ENCODE measurements at regions of chr12 and their contacts with region 1.

Region 1: DNA sequence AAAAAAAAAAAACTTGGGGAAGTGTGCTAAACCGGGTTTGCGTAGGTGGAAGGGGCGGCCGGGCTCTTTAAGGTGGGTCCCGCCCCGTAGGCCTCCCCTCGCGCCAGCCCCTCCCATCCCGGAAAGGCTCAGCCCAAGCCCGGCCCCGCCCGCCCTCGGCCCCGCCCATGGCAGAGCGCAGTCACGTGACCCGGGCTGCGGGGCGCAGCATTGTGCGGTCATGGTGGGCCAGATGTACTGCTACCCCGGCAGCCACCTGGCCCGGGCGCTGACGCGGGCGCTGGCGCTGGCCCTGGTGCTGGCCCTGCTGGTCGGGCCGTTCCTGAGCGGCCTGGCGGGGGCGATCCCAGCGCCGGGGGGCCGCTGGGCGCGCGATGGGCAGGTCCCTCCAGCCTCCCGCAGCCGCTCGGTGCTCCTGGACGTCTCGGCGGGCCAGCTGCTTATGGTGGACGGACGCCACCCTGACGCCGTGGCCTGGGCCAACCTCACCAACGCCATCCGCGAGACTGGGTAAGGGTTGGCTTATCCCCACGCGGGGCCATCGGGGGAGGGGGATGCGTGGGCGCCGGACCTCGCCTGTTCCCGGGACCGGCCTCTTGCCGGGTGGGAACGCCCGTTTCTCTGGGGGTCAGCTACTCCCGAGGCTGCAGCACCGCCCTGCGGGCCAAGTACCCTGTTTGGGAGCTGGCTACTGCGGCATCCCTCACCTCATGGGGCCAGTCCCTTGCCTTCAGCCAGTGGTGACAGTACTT is at the start of gene PLBD2:
- DNase-seq: peak; percentile 89 to 93 (median 90)
- H3K4me3 ChIP-seq: peak within 1 kb of the TSS; percentile 68 to 90 (median 86)
- H3K4me3 Mint-ChIP-seq: peak within 1 kb of the TSS; percentile 91 to 92
- H3K27ac ChIP-seq: peak within 1 kb of the TSS; percentile 69 to 82
- H3K27ac Mint-ChIP-seq: peak within 1 kb of the TSS; percentile 90 to 97 (median 94)
- H3K4me1 ChIP-seq: peaks cover 32 to 33% of the 10 kb centered on the region in 2 donors
- H3K4me1 Mint-ChIP-seq: peaks cover 34% of the 10 kb centered on the region
- H3K27me3 ChIP-seq: no peaks in the 10 kb centered on the region
- H3K27me3 Mint-ChIP-seq: peaks cover 0 to 5% (median 4%) of the 10 kb centered on the region in 3 donors
- CTCF ChIP-seq: no peak
- polyA plus RNA-seq, gene PLBD2: 8.5 to 12.4 (median 8.8) TPM

Region 2: GRCh38 chr12:113322343-113322742 is 36.2 kb before region 1 on chr12:
- intact Hi-C with region 1: loop called in 1 of 2 experiments (anchors 5 kb)
- DNase-seq: peak; percentile 75 to 85 (median 81)
- H3K4me3 ChIP-seq: no peak overlapping the region
- H3K4me3 Mint-ChIP-seq: no peak overlapping the region
- H3K27ac ChIP-seq: peak overlapping the region; percentile 48 to 51
- H3K27ac Mint-ChIP-seq: peak overlapping the region; percentile 84 to 93 (median 90)
- H3K4me1 ChIP-seq: no peaks in the 10 kb centered on the region
- H3K4me1 Mint-ChIP-seq: peaks cover 6% of the 10 kb centered on the region
- H3K27me3 ChIP-seq: no peaks in the 10 kb centered on the region
- H3K27me3 Mint-ChIP-seq: peaks cover 0 to 2% (median 2%) of the 10 kb centered on the region in 3 donors
- CTCF ChIP-seq: no peak

Region 3: DNA sequence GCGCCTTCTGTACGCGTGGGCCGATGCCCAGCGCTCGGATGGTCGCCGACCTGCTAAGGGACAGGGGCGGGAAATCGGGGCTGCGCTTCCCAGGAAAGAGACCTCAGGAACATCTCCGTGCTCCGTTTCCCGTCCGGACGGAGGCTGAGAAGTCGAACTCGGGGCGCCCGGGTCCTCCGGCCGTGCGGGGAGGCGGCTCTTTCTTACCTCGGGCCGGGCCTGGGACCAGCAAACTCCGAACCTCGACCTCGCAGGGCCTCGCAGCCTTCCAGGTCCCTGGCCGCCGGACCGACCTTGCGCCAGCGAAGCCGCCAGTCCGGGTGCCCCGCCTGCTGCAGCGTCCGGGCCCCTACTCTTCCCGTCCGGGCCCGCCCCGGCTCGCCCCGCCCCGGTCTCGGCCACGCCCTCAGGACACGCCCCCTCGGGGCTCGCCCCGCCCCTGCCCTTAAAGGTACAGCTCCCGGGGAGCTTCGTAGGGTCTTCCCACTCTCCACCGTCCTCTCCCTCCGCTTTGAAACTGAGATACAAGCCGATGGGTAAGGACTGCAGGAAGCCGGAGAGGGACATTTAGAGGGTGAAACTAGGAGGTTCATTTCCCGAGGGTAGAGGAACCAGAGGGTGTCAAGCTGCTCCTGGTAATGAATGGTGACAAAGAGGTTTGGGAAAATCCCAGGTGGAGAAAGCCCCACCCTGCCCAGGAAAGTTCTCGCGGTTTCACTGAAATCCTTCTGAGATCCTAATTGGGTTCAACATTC is 23.6 kb before region 1 on chr12 and contains the start of gene SLC8B1:
- intact Hi-C with region 1: loop called (anchors 1 to 2 kb)
- DNase-seq: peak; percentile 68 to 86 (median 79)
- H3K4me3 ChIP-seq: peak within 1 kb of the TSS; percentile 74 to 93 (median 75)
- H3K4me3 Mint-ChIP-seq: peak within 1 kb of the TSS; percentile 96 to 98
- H3K27ac ChIP-seq: peak within 1 kb of the TSS; percentile 72 to 88
- H3K27ac Mint-ChIP-seq: peak within 1 kb of the TSS; percentile 90 to 98 (median 93)
- H3K4me1 ChIP-seq: peaks cover 28 to 44% of the 10 kb centered on the region in 2 donors
- H3K4me1 Mint-ChIP-seq: peaks cover 43% of the 10 kb centered on the region
- H3K27me3 ChIP-seq: no peaks in the 10 kb centered on the region
- H3K27me3 Mint-ChIP-seq: peaks cover 0 to 2% (median 0%) of the 10 kb centered on the region in 3 donors
- CTCF ChIP-seq: no peak
- polyA plus RNA-seq, gene SLC8B1: 21.6 to 46.0 (median 32.4) TPM

Region 4: DNA sequence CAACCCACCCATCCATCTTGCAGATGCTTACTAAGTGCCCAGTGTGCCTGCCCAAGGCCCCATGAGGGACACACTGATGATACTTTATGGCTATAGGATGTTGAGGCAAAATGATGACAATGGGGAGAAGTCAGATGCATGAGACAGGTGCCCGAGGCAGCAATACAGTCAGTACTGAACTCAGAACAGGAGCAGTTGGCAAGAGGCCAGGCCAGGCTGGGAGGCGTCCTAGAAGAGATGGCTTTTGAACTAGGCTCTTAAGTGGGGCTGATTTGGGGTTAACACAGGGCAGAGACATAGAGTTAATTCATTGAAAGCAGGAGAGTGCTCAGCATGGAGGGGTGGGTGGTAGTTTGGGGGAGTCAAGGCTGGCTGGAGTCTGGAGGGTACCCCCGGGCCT is 15.4 kb after region 1 on chr12:
- intact Hi-C with region 1: no loop called
- DNase-seq: no peak
- H3K4me3 ChIP-seq: no peak overlapping the region
- H3K4me3 Mint-ChIP-seq: no peak overlapping the region
- H3K27ac ChIP-seq: no peak overlapping the region
- H3K27ac Mint-ChIP-seq: no peak overlapping the region
- H3K4me1 ChIP-seq: peaks cover 11 to 12% of the 10 kb centered on the region in 2 donors
- H3K4me1 Mint-ChIP-seq: peaks cover 20% of the 10 kb centered on the region
- H3K27me3 ChIP-seq: no peaks in the 10 kb centered on the region
- H3K27me3 Mint-ChIP-seq: no peaks in the 10 kb centered on the region
- CTCF ChIP-seq: no peak

Measured in CD14-positive monocyte (primary cell).